Cardiac septum (tissue), 1 donor: ENCODE measurements at regions of chr13 and their contacts with region 1.

Region 1: DNA sequence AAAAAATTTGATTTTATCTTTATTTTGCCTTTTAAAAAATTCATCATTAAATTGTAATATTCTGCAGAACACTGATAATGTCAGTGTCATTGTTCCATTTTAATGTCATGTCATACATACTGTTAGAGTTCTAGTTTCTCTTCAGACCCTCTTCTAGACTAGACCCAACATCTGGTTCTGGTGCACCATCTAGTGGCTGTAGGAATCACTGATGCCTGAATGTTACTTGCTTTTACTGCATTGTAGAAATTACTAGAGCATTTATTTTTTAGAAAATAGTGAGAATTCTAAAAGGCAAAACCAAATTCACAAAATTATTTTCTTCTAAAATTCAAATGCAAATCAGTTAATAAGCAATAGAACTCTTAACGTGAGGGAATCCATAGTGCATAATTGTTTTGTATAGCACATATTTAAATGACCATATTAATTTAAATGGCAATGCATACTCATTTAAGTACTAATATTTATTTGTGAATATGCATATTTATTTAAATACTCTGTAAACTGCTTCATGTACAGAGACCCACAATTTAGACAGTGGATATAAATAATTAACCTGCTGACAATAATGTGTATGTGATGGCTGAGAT is 425.7 kb downstream of the KLF12 start:
- DNase-seq: no peak

Region 2: DNA sequence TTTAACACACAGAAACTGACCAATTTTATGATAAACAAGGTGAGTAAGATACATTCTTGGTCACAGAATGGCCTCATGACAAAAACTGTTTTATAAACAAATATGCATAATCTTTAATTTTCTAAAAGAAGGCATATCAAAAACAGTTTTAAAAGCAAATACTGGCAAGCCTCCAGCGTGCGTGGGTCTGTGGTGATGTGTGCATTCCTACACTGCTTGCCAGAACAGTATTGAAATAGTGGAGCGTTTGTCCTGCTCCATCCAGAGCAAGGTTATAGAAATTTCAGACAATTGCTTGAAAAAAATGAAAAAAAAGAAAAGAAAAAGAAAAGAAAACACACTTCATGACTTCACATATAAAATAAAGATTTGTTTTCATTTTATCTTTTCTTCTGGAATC is 1122.0 kb before region 1 on chr13:
- intact Hi-C with region 1: no loop called
- DNase-seq: no peak

Region 3: DNA sequence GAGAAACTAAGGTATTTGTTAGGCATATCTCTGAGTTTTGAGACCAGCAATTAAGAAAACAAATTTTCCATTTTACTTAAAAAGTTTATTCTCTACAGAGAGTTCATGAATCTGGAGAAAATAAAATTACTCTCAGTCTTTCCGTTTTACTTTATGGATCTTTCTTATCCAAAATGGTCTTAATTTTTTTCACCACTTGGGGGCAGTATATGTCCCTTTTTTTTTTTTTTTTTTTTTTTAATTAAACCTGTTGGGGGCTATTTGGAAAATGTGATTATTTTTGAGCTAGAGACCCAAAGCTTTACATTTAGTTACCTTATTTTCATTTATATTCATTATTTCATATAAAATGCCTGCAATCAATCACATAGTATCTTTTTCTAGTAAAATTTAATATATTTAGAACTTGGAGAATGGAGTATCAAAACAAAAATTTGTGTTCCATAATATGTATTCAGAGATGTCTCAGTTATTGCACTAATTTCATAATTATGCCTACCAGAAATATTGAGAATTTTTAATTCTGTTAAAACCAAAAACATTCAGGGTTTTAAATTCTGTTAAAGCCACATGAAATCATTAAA is 899.5 kb before region 1 on chr13:
- intact Hi-C with region 1: loop called (anchors 10 kb)
- DNase-seq: no peak

Region 4: DNA sequence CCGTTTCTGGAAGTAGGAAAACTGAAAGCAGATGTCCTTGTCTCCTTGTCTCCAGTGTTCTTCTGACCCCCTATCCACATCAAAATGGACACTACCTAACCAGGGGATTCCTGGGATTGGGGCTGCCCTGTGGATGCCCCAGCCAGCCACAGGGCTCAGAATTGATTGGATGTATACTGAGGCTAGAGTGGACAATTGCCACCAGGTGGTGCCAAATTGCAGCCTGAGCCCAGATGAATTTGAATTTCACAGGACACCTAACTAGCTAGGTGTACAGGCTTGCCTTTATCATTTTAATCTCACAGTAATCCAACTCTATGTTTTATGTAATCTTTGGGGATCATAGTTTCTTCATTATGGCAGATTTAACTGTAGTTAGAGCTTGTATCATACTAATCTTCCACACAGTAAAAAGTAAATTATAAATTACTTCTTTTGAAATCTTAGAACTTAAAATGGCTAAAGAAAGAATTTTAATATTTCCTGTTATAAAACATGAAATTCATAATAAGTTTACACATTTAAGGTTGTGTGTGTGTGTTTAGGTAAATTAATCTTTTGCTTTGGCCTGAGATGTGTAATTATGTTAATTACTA is 868.6 kb before region 1 on chr13:
- intact Hi-C with region 1: loop called (anchors 10 kb)
- DNase-seq: no peak

Region 5: DNA sequence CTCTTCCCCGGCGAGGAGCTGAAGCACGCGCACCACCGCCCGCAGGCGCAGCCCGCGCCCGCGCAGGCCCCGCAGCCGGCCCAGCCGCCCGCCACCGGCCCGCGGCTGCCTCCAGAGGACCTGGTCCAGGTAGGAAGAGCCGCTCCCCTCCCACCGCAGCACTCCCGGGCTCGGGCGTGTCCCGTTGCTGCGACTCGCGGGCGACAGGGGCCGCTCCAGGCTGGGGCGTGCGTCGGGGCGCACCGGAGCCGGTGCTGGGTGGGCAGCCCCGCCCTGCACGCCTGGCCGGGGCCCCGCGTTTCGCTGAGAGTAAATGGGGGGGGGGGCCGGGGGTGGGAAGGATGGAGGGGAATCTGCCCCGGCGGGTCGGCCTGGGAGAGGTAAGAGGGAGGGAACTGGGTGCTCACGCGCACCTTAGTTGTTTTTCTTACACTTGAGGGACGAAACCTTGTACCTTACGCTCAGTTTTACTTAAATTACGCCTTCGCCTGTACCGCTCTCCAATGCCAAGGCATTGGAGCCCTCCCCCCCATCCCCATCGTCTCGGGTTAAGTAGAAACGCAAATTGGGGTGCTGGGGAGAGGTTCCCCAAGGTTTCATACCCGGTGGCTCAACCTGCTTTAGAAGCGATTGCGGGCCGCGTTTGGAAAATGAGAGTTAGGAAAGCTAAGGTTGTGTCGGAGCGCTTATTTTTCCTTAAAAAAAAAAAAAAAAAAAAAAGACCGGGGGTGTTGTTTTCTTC is 648.9 kb before region 1 on chr13:
- intact Hi-C with region 1: loop called (anchors 10 kb)
- DNase-seq: peak; percentile 87